Calu3 (cell line): ENCODE measurements at regions of chr1 and their contacts with region 1.

Region 1: DNA sequence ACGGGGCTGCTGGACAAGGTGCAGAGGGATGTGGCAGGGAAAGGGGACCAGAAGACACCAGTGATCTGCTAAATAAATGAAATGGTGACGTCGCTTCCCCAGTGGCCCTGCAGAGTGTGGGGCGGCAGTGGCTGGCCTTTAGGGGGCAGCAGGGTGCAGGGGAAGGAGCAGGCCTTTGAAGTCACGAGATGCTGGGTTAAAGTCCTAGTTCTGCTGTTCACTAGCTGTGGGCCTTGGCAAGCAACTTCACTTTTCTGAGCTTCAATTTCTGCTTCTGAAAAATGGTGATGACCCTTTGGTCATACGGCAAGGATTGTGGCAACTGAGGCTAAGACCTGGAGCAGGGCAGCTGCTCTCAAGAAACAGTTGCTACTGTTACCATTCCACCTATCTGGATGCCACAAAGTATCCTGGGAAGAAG is 9.2 kb upstream of the GALE start:
- DNase-seq: peak; percentile 79
- H3K4me3 Mint-ChIP-seq: no peak overlapping the region
- H3K27ac Mint-ChIP-seq: no peak overlapping the region
- H3K4me1 Mint-ChIP-seq: no peaks in the 10 kb centered on the region
- H3K27me3 Mint-ChIP-seq: no peaks in the 10 kb centered on the region
- CTCF ChIP-seq: peak; percentile 70

Region 2: GRCh38 chr1:23081376-23081775 is 728.4 kb before region 1 on chr1:
- CTCF ChIA-PET with region 1: no interaction called
- intact Hi-C with region 1: no loop called
- DNase-seq: no peak
- H3K4me3 Mint-ChIP-seq: no peak overlapping the region
- H3K27ac Mint-ChIP-seq: no peak overlapping the region
- H3K4me1 Mint-ChIP-seq: no peaks in the 10 kb centered on the region
- H3K27me3 Mint-ChIP-seq: no peaks in the 10 kb centered on the region
- CTCF ChIP-seq: no peak

Region 3: DNA sequence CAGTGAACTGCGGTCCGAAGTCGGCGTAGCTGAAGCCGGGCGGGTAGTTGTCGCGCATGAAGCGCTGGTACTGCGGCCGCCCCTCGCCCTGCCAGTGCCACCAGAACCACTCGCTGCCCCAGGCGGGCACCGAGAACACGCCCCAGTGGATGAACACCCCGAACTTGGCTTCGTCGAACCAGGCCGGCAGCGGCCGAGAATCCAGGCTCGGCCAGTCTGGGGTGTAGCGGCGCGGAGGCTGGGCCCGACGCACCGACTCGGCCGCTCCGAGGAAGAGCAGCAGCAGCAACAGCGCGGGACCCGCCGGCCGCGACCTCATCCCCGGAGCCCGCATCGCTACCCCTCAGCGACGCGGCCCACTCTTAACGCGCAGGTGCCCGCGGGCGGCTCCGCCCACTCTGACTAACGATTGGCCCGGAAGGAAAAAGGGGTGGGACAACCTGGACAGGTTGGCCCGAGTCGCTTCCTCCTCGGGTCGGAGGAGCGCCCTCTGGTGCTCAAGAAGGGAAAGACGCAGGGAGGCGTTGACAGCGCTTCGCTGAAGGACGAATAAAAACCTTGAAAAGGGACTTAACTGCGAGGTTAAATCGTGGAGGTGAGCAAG is 58.3 kb after region 1 on chr1 and contains the start of gene FUCA1:
- CTCF ChIA-PET with region 1: no interaction called
- intact Hi-C with region 1: loop called (anchors 10 kb)
- DNase-seq: peak; percentile 92
- H3K4me3 Mint-ChIP-seq: peak within 1 kb of the TSS; percentile 89
- H3K27ac Mint-ChIP-seq: peak within 1 kb of the TSS; percentile 1
- H3K4me1 Mint-ChIP-seq: peaks cover 21% of the 10 kb centered on the region
- H3K27me3 Mint-ChIP-seq: no peaks in the 10 kb centered on the region
- CTCF ChIP-seq: peak; percentile 70
- total RNA-seq, gene FUCA1: 17.2 and 22.9 TPM in 2 replicates